Mammary epithelial cell (primary cell): ENCODE measurements at regions of chr5 and their contacts with region 1.

Region 1: DNA sequence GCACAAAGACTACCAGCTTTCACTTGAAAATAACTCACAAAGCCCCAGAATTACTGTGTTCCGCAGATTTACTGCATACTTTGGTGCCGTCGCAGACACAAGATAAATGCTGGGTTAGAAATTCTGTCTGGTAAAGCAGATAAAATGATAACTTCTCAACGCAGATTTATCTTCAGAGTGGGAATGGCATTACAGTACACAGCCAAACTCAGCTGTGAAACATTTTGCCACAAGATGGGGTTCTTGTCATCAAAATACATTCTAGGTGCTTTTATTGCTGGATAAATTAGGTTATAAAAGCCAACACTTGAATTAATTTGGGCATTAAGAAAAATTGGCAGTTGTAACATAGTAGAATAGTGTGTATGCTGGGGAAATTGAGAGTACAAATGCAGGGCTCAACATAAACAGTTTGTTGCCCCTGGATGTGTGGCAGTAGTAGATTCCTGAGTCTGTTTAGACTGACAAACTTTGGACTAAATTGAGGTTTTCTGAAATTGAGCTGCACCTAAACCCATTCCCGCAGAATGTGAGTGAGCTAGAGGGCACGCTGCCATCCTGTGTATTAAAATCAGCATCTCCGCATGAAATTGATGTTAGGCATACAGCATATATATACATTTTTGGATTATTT is 61.1 kb downstream of the LMNB1 start:
- DNase-seq: no peak
- H3K4me3 ChIP-seq: no peak overlapping the region
- H3K27ac ChIP-seq: no peak overlapping the region
- H3K4me1 ChIP-seq: no peaks in the 10 kb centered on the region
- H3K27me3 ChIP-seq: no peaks in the 10 kb centered on the region
- CTCF ChIP-seq: peak in 1 of 2 donors; percentile 37

Region 2: GRCh38 chr5:126988021-126988569 is 150.1 kb after region 1 on chr5:
- CTCF ChIA-PET with region 1: no interaction called
- dilution Hi-C with region 1: no loop called
- in situ Hi-C with region 1: no loop called
- intact Hi-C with region 1: no loop called
- DNase-seq: no peak
- H3K4me3 ChIP-seq: no peak overlapping the region
- H3K27ac ChIP-seq: no peak overlapping the region
- H3K4me1 ChIP-seq: no peaks in the 10 kb centered on the region
- H3K27me3 ChIP-seq: no peaks in the 10 kb centered on the region
- CTCF ChIP-seq: no peak

Region 3: GRCh38 chr5:127441799-127442484 is 603.9 kb after region 1 on chr5:
- CTCF ChIA-PET with region 1: no interaction called
- dilution Hi-C with region 1: no loop called
- in situ Hi-C with region 1: no loop called
- intact Hi-C with region 1: loop called (anchors 5 kb)
- DNase-seq: peak; percentile 4
- H3K4me3 ChIP-seq: no peak overlapping the region
- H3K27ac ChIP-seq: no peak overlapping the region
- H3K4me1 ChIP-seq: no peaks in the 10 kb centered on the region
- H3K27me3 ChIP-seq: peaks cover 8% of the 10 kb centered on the region
- CTCF ChIP-seq: peak; percentile 17 to 35